HCT116 (cell line): ENCODE measurements at regions of chr6 and their contacts with region 1.

Region 1: GRCh38 chr6:153435787-153436186 is 304.7 kb upstream of the RGS17 start:
- DNase-seq: no peak
- ATAC-seq: no peak
- H3K4me3 ChIP-seq: no peak overlapping the region
- H3K27ac ChIP-seq: no peak overlapping the region
- H3K4me1 ChIP-seq: no peaks in the 10 kb centered on the region
- H3K27me3 ChIP-seq: peaks cover 11% of the 10 kb centered on the region
- CTCF ChIP-seq: no peak
- POLR2A ChIP-seq: no peak
- RAD21 ChIP-seq: no peak

Region 2: GRCh38 chr6:153301602-153302001 is 134.2 kb before region 1 on chr6:
- CTCF ChIA-PET with region 1: no interaction called
- POLR2A ChIA-PET with region 1: no interaction called
- RAD21 ChIA-PET with region 1: no interaction called
- intact Hi-C with region 1: no loop called
- DNase-seq: no peak
- ATAC-seq: peak; percentile 74
- H3K4me3 ChIP-seq: no peak overlapping the region
- H3K27ac ChIP-seq: no peak overlapping the region
- H3K4me1 ChIP-seq: no peaks in the 10 kb centered on the region
- H3K27me3 ChIP-seq: peaks cover 14% of the 10 kb centered on the region
- CTCF ChIP-seq: no peak
- POLR2A ChIP-seq: no peak
- RAD21 ChIP-seq: no peak

Region 3: GRCh38 chr6:153412519-153412918 is 23.3 kb before region 1 on chr6:
- CTCF ChIA-PET with region 1: no interaction called
- POLR2A ChIA-PET with region 1: no interaction called
- RAD21 ChIA-PET with region 1: no interaction called
- intact Hi-C with region 1: loop called (anchors 2 kb)
- DNase-seq: no peak
- ATAC-seq: no peak
- H3K4me3 ChIP-seq: no peak overlapping the region
- H3K27ac ChIP-seq: no peak overlapping the region
- H3K4me1 ChIP-seq: no peaks in the 10 kb centered on the region
- H3K27me3 ChIP-seq: peaks cover 2% of the 10 kb centered on the region; the same call in 1 of the 2 replicates
- CTCF ChIP-seq: no peak
- POLR2A ChIP-seq: no peak
- RAD21 ChIP-seq: no peak